Endothelial cell of umbilical vein (primary cell): ENCODE measurements at regions of chrX and their contacts with region 1.

Region 1: GRCh38 chrX:71068049-71068763 is at the start of gene SNX12:
- DNase-seq: peak; percentile 94
- H3K4me3 ChIP-seq: peak within 1 kb of the TSS; percentile 79 to 97 (median 97)
- H3K27ac ChIP-seq: peak within 1 kb of the TSS; percentile 57
- H3K4me1 ChIP-seq: no peaks in the 10 kb centered on the region
- H3K27me3 ChIP-seq: no peaks in the 10 kb centered on the region
- CTCF ChIP-seq: no peak
- POLR2A ChIP-seq: peak; percentile 74
- total RNA-seq, gene SNX12: 85.5 and 90.6 TPM in 2 replicates

Region 2: GRCh38 chrX:70525733-70526132 is 542.5 kb before region 1 on chrX:
- CTCF ChIA-PET with region 1: no interaction called
- POLR2A ChIA-PET with region 1: no interaction called
- dilution Hi-C with region 1: no loop called
- intact Hi-C with region 1: no loop called
- DNase-seq: no peak
- H3K4me3 ChIP-seq: no peak overlapping the region
- H3K27ac ChIP-seq: no peak overlapping the region
- H3K4me1 ChIP-seq: no peaks in the 10 kb centered on the region
- H3K27me3 ChIP-seq: no peaks in the 10 kb centered on the region
- CTCF ChIP-seq: no peak
- POLR2A ChIP-seq: no peak

Region 3: GRCh38 chrX:70826715-70827114 is 241.5 kb before region 1 on chrX:
- CTCF ChIA-PET with region 1: no interaction called
- POLR2A ChIA-PET with region 1: no interaction called
- dilution Hi-C with region 1: no loop called
- intact Hi-C with region 1: no loop called
- DNase-seq: no peak
- H3K4me3 ChIP-seq: no peak overlapping the region
- H3K27ac ChIP-seq: no peak overlapping the region
- H3K4me1 ChIP-seq: no peaks in the 10 kb centered on the region
- H3K27me3 ChIP-seq: no peaks in the 10 kb centered on the region
- CTCF ChIP-seq: no peak
- POLR2A ChIP-seq: no peak

Region 4: GRCh38 chrX:71098302-71098701 is 30.1 kb after region 1 on chrX:
- CTCF ChIA-PET with region 1: no interaction called
- POLR2A ChIA-PET with region 1: no interaction called
- dilution Hi-C with region 1: no loop called
- intact Hi-C with region 1: loop called (anchors 1 kb)
- DNase-seq: peak; percentile 53
- H3K4me3 ChIP-seq: no peak overlapping the region
- H3K27ac ChIP-seq: no peak overlapping the region
- H3K4me1 ChIP-seq: peaks cover 6% of the 10 kb centered on the region
- H3K27me3 ChIP-seq: peaks cover 0 to 1% of the 10 kb centered on the region in 2 experiments
- CTCF ChIP-seq: peak; percentile 41 to 49
- POLR2A ChIP-seq: no peak